ENCODE measurements at regions of chr6 and their contacts with region 1.

Region 1: GRCh38 chr6:107114213-107114905 is 956 bp downstream of the BEND3 start:
- DNase-seq: no peak
- ATAC-seq: peak; percentile 86
- H3K4me3 ChIP-seq: peak overlapping the region; percentile 59 to 77
- H3K27ac ChIP-seq: peak overlapping the region; percentile 79
- H3K4me1 ChIP-seq: peaks cover 16% of the 10 kb centered on the region
- H3K27me3 ChIP-seq: no peaks in the 10 kb centered on the region
- CTCF ChIP-seq: peak; percentile 98

Region 2: GRCh38 chr6:106510090-106510970 is 604.0 kb before region 1 on chr6:
- CTCF ChIA-PET with region 1: interaction called, 10 read pairs
- POLR2A ChIA-PET with region 1: no interaction called
- in situ Hi-C with region 1: no loop called
- intact Hi-C with region 1: no loop called
- DNase-seq: no peak
- ATAC-seq: peak; percentile 77
- H3K4me3 ChIP-seq: peak overlapping the region; percentile 80 to 82
- H3K27ac ChIP-seq: peak overlapping the region; percentile 97
- H3K4me1 ChIP-seq: peaks cover 29% of the 10 kb centered on the region
- H3K27me3 ChIP-seq: no peaks in the 10 kb centered on the region
- CTCF ChIP-seq: peak; percentile 62

Region 3: GRCh38 chr6:106670236-106670635 is 444.1 kb before region 1 on chr6:
- CTCF ChIA-PET with region 1: no interaction called
- POLR2A ChIA-PET with region 1: no interaction called
- in situ Hi-C with region 1: no loop called
- intact Hi-C with region 1: loop called (anchors 10 kb)
- DNase-seq: no peak
- ATAC-seq: no peak
- H3K4me3 ChIP-seq: no peak overlapping the region
- H3K27ac ChIP-seq: no peak overlapping the region
- H3K4me1 ChIP-seq: no peaks in the 10 kb centered on the region
- H3K27me3 ChIP-seq: no peaks in the 10 kb centered on the region
- CTCF ChIP-seq: no peak

Region 4: DNA sequence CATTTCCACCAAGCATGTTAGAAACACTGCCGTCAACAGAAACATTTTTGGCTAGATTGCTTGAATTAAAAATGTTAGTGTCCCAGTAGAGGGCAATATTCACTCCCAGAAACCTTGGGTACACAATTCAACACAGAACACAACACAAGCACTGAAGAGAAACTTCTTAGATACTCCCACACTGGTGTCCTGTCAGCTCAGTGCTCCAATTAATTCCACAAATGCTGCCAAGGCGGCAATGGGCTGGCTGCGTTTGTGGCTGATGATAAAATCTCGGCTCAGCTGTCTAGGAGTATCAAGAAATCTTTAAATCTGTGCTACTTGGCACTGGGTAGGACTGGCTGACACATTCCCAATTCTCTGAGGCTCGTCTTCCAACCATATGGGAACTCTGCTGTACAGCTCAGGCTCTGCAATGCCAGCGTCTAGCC is 38.4 kb before region 1 on chr6:
- CTCF ChIA-PET with region 1: interaction called, 3 read pairs
- POLR2A ChIA-PET with region 1: no interaction called
- in situ Hi-C with region 1: no loop called
- intact Hi-C with region 1: loop called (anchors 5 kb)
- DNase-seq: no peak
- ATAC-seq: no peak
- H3K4me3 ChIP-seq: no peak overlapping the region
- H3K27ac ChIP-seq: no peak overlapping the region
- H3K4me1 ChIP-seq: no peaks in the 10 kb centered on the region
- H3K27me3 ChIP-seq: no peaks in the 10 kb centered on the region
- CTCF ChIP-seq: no peak

Measured in Panc1 (cell line).